ENCODE measurements at regions of chr10 and their contacts with region 1.

Region 1: DNA sequence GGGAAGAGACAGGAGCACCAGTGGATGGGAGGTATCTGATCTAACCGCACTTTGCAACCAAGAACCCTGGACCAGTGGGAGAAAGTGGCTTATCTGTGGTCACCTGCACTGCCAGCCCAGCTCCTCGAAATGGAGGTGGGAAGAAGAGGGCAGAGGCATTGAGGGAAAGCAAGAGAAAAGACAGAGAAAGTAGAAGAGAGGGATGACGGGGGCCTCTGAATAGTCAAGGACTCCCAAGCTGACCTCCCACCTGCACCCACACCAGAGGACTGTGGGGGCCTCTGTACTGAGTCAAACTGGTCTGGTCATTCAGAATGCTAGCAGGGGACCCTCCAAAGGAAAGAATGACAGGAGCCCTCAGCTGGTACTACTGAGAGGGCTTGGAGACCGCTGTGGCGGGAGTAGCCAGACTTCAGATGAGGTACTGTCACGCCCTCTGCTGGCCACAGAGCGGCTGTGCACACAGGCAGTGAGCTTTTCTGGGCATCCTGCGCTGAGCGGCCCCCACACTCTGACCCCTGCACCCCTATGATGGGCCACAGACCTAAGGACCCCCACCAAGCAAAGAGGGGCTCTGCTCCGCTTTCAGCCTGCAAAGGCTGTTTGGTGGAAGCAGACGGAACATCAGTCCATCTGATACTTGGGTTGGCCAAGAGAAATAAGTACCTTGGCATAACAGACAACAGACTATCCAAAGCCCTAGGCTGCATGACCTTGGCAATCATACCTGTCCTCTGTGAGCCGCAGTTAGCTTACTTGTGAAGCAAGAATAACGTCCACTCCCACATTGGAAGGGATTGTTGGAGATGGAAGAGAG is 112.9 kb downstream of the COL13A1 start:
- DNase-seq: peak; percentile 65 to 74
- ATAC-seq: peak; percentile 87 to 97
- H3K4me3 ChIP-seq: no peak overlapping the region
- H3K27ac ChIP-seq: no peak overlapping the region
- H3K4me1 ChIP-seq: no peaks in the 10 kb centered on the region
- CTCF ChIP-seq: peak; percentile 92
- EP300 ChIP-seq: no peak
- POLR2A ChIP-seq: no peak
- RAD21 ChIP-seq: peak; percentile 91 to 92

Region 2: GRCh38 chr10:69716711-69717560 is 197.7 kb before region 1 on chr10:
- CTCF ChIA-PET with region 1: interaction called, 23 read pairs
- POLR2A ChIA-PET with region 1: no interaction called
- DNase-seq: peak; percentile 58 to 84
- ATAC-seq: peak; percentile 84 to 95
- H3K4me3 ChIP-seq: no peak overlapping the region
- H3K27ac ChIP-seq: no peak overlapping the region
- H3K4me1 ChIP-seq: no peaks in the 10 kb centered on the region
- CTCF ChIP-seq: peak; percentile 83
- EP300 ChIP-seq: no peak
- POLR2A ChIP-seq: no peak
- RAD21 ChIP-seq: peak; percentile 81 to 89

Region 3: GRCh38 chr10:69800109-69800508 is 114.5 kb before region 1 on chr10:
- CTCF ChIA-PET with region 1: interaction called, 41 read pairs
- POLR2A ChIA-PET with region 1: no interaction called
- DNase-seq: peak; percentile 71 to 72
- ATAC-seq: peak; percentile 70 to 85; a peak in 5 of 6 replicates
- H3K4me3 ChIP-seq: no peak overlapping the region
- H3K27ac ChIP-seq: no peak overlapping the region
- H3K4me1 ChIP-seq: peaks cover 9% of the 10 kb centered on the region; the same call in 2 of the 3 replicates
- CTCF ChIP-seq: peak; percentile 72
- EP300 ChIP-seq: no peak
- POLR2A ChIP-seq: no peak
- RAD21 ChIP-seq: peak; percentile 53 to 72

Region 4: GRCh38 chr10:69855346-69856111 is 59.1 kb before region 1 on chr10:
- CTCF ChIA-PET with region 1: interaction called, 103 read pairs
- POLR2A ChIA-PET with region 1: no interaction called
- DNase-seq: no peak
- ATAC-seq: no peak
- H3K4me3 ChIP-seq: no peak overlapping the region
- H3K27ac ChIP-seq: no peak overlapping the region
- H3K4me1 ChIP-seq: no peaks in the 10 kb centered on the region; the same call in 2 of the 3 replicates
- CTCF ChIP-seq: no peak
- EP300 ChIP-seq: no peak
- POLR2A ChIP-seq: no peak
- RAD21 ChIP-seq: no peak

Region 5: GRCh38 chr10:69901628-69902505 is 12.7 kb before region 1 on chr10:
- CTCF ChIA-PET with region 1: interaction called, 182 read pairs
- POLR2A ChIA-PET with region 1: no interaction called
- DNase-seq: peak; percentile 52 to 96
- ATAC-seq: peak; percentile 84 to 97
- H3K4me3 ChIP-seq: no peak overlapping the region
- H3K27ac ChIP-seq: peak overlapping the region in 1 of 2 experiments; percentile 40; a peak in 1 of 6 replicates
- H3K4me1 ChIP-seq: no peaks in the 10 kb centered on the region
- CTCF ChIP-seq: peak; percentile 47
- EP300 ChIP-seq: no peak
- POLR2A ChIP-seq: no peak
- RAD21 ChIP-seq: peak in 1 of 2 experiments; percentile 34; a peak in 1 of 5 replicates

Region 6: DNA sequence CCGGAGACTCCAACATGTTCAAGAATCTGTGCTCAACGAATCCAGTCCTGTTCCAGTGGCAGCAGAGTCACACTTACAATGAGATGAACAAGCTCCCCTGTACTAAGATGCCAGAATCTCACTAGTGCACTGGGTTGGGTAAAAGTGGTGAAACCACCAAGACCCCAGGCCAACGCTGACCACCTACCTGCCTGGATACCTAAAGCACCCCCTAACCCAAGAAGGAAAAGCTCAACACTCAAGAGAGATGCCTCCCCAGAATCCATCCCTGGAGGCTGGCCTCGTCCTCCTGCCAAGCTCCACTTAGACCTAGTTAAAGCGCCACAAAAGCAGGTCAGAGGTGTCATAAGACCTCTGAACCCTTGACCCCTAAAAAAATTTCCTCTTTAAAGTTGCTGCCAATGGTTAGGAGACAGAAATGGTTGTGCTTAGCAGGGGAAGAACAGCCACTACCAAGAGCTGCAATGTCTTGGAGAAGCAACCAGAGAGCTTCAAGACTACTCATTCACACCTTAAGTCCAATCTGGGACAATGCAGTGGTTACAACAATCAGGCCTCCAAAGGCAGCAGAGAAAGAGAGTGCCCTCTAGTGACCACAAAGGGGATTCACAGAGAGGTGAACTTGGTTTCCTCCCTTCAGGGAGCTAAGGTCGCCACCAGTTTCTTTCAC is 43.4 kb after region 1 on chr10:
- CTCF ChIA-PET with region 1: interaction called, 21 read pairs
- POLR2A ChIA-PET with region 1: no interaction called
- DNase-seq: peak; percentile 61 to 82
- ATAC-seq: peak; percentile 47 to 87; a peak in 5 of 6 replicates
- H3K4me3 ChIP-seq: no peak overlapping the region
- H3K27ac ChIP-seq: no peak overlapping the region
- H3K4me1 ChIP-seq: no peaks in the 10 kb centered on the region
- CTCF ChIP-seq: peak; percentile 69
- EP300 ChIP-seq: no peak
- POLR2A ChIP-seq: no peak
- RAD21 ChIP-seq: peak; percentile 47 to 71; a peak in 4 of 5 replicates

Measured in A549 (cell line).